Mammary epithelial cell (primary cell): ENCODE measurements at regions of chr5 and their contacts with region 1.

Region 1: GRCh38 chr5:111278845-111279504 is 54.8 kb downstream of the CAMK4 start:
- DNase-seq: peak; percentile 35
- H3K4me3 ChIP-seq: no peak overlapping the region
- H3K27ac ChIP-seq: no peak overlapping the region
- H3K4me1 ChIP-seq: no peaks in the 10 kb centered on the region
- H3K27me3 ChIP-seq: no peaks in the 10 kb centered on the region
- CTCF ChIP-seq: peak; percentile 82 to 91

Region 2: GRCh38 chr5:110707260-110707844 is 571.6 kb before region 1 on chr5:
- CTCF ChIA-PET with region 1: no interaction called
- dilution Hi-C with region 1: no loop called
- in situ Hi-C with region 1: no loop called
- intact Hi-C with region 1: no loop called
- DNase-seq: no peak
- H3K4me3 ChIP-seq: no peak overlapping the region
- H3K27ac ChIP-seq: no peak overlapping the region
- H3K4me1 ChIP-seq: no peaks in the 10 kb centered on the region
- H3K27me3 ChIP-seq: peaks cover 2% of the 10 kb centered on the region
- CTCF ChIP-seq: no peak

Region 3: GRCh38 chr5:111389390-111390082 is 110.6 kb after region 1 on chr5:
- CTCF ChIA-PET with region 1: no interaction called
- dilution Hi-C with region 1: no loop called
- in situ Hi-C with region 1: no loop called
- intact Hi-C with region 1: no loop called
- DNase-seq: peak; percentile 94
- H3K4me3 ChIP-seq: no peak overlapping the region
- H3K27ac ChIP-seq: peak overlapping the region; percentile 95
- H3K4me1 ChIP-seq: peaks cover 20% of the 10 kb centered on the region
- H3K27me3 ChIP-seq: no peaks in the 10 kb centered on the region
- CTCF ChIP-seq: peak in 1 of 2 donors; percentile 26

Region 4: DNA sequence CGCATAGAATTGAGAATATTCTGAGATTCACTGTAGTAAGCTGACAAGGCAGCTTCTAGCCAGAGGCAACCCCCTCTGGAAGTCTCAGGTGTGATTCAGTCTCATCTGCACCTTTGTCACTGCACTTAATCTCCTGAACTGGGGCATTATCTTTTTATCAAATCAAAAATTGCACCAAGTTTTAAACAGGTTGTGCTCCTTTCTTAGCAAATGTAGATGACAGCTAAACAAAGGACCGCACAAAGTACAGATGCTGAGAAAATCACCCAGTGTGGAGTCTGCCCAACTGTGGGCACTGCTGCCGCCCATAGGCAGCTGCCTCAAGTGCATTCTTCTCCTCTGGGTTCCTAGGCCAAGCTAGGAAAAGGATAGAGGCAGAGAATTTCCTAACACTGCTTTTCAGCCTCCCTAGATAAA is 182.3 kb after region 1 on chr5:
- CTCF ChIA-PET with region 1: no interaction called
- dilution Hi-C with region 1: no loop called
- in situ Hi-C with region 1: no loop called
- intact Hi-C with region 1: loop called (anchors 1 kb)
- DNase-seq: peak; percentile 38
- H3K4me3 ChIP-seq: no peak overlapping the region
- H3K27ac ChIP-seq: no peak overlapping the region
- H3K4me1 ChIP-seq: no peaks in the 10 kb centered on the region
- H3K27me3 ChIP-seq: no peaks in the 10 kb centered on the region
- CTCF ChIP-seq: peak; percentile 43 to 68